ENCODE measurements at regions of chrX and their contacts with region 1.

Region 1: GRCh38 chrX:31036895-31037294 is 34.9 kb downstream of the FTHL17 start:
- DNase-seq: peak; percentile 31
- H3K4me3 ChIP-seq: no peak overlapping the region
- H3K27ac ChIP-seq: no peak overlapping the region
- H3K4me1 ChIP-seq: peaks cover 2% of the 10 kb centered on the region
- H3K27me3 ChIP-seq: no peaks in the 10 kb centered on the region
- CTCF ChIP-seq: peak; percentile 44 to 58
- POLR2A ChIP-seq: no peak

Region 2: DNA sequence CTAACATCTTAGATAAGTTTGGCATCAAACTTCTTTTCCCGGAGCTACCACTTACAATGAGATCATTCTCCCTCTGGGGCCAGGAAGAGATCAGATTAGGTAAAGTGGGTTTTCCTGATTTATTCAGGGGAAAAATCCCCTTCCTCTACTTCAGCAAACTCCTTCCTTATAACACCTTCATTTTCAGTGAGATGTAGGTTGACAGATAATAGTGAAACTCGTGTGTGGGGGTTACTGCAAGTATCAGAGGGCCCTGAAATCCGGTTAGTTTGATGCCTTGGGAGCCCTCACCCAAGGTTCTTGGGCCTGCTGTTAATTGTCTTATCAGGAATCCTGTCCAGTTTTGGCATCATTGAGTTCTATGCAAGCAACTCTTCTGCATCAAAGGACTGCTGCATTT is 24.2 kb after region 1 on chrX:
- CTCF ChIA-PET with region 1: no interaction called
- POLR2A ChIA-PET with region 1: no interaction called
- dilution Hi-C with region 1: no loop called
- intact Hi-C with region 1: no loop called
- DNase-seq: no peak
- H3K4me3 ChIP-seq: no peak overlapping the region
- H3K27ac ChIP-seq: no peak overlapping the region
- H3K4me1 ChIP-seq: no peaks in the 10 kb centered on the region
- H3K27me3 ChIP-seq: no peaks in the 10 kb centered on the region
- CTCF ChIP-seq: no peak
- POLR2A ChIP-seq: no peak

Region 3: GRCh38 chrX:31266172-31267076 is 229.5 kb after region 1 on chrX:
- CTCF ChIA-PET with region 1: interaction called, 4 read pairs
- POLR2A ChIA-PET with region 1: no interaction called
- dilution Hi-C with region 1: no loop called
- intact Hi-C with region 1: loop called (anchors 5 kb)
- DNase-seq: peak; percentile 53
- H3K4me3 ChIP-seq: peak overlapping the region; percentile 57 to 81 (median 74)
- H3K27ac ChIP-seq: peak overlapping the region; percentile 37
- H3K4me1 ChIP-seq: no peaks in the 10 kb centered on the region
- H3K27me3 ChIP-seq: no peaks in the 10 kb centered on the region
- CTCF ChIP-seq: no peak
- POLR2A ChIP-seq: no peak

Region 4: DNA sequence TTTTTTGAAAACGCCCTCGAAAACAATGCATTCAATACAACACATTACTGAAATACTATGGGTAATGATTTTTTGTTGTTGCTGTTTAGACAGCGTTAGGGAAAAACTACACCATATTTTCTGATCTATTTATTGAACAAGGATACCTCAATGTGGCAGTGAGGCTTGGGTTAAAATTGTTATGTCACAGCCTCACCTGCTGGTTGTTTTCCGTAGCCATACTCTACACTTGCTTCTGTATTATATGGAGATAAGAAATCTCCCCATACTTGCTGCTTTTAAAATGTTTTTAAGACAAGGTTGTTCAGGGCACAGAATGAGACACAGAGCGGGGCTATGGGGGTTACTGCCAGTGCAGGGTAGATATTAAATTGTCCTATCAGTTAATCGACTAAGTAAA is 256.5 kb after region 1 on chrX:
- CTCF ChIA-PET with region 1: interaction called, 28 read pairs
- POLR2A ChIA-PET with region 1: no interaction called
- dilution Hi-C with region 1: no loop called
- intact Hi-C with region 1: loop called (anchors 1 kb)
- DNase-seq: peak; percentile 13
- H3K4me3 ChIP-seq: no peak overlapping the region
- H3K27ac ChIP-seq: no peak overlapping the region
- H3K4me1 ChIP-seq: no peaks in the 10 kb centered on the region
- H3K27me3 ChIP-seq: no peaks in the 10 kb centered on the region
- CTCF ChIP-seq: peak in 1 of 2 donors; percentile 16
- POLR2A ChIP-seq: no peak

Region 5: GRCh38 chrX:31423609-31424189 is 386.8 kb after region 1 on chrX:
- CTCF ChIA-PET with region 1: interaction called, 66 read pairs
- POLR2A ChIA-PET with region 1: no interaction called
- dilution Hi-C with region 1: no loop called
- intact Hi-C with region 1: loop called (anchors 1 kb)
- DNase-seq: peak; percentile 44
- H3K4me3 ChIP-seq: no peak overlapping the region
- H3K27ac ChIP-seq: no peak overlapping the region
- H3K4me1 ChIP-seq: no peaks in the 10 kb centered on the region
- H3K27me3 ChIP-seq: no peaks in the 10 kb centered on the region
- CTCF ChIP-seq: peak; percentile 33 to 42
- POLR2A ChIP-seq: no peak